SK-N-SH (cell line): ENCODE measurements at regions of chr7 and their contacts with region 1.

Region 1: DNA sequence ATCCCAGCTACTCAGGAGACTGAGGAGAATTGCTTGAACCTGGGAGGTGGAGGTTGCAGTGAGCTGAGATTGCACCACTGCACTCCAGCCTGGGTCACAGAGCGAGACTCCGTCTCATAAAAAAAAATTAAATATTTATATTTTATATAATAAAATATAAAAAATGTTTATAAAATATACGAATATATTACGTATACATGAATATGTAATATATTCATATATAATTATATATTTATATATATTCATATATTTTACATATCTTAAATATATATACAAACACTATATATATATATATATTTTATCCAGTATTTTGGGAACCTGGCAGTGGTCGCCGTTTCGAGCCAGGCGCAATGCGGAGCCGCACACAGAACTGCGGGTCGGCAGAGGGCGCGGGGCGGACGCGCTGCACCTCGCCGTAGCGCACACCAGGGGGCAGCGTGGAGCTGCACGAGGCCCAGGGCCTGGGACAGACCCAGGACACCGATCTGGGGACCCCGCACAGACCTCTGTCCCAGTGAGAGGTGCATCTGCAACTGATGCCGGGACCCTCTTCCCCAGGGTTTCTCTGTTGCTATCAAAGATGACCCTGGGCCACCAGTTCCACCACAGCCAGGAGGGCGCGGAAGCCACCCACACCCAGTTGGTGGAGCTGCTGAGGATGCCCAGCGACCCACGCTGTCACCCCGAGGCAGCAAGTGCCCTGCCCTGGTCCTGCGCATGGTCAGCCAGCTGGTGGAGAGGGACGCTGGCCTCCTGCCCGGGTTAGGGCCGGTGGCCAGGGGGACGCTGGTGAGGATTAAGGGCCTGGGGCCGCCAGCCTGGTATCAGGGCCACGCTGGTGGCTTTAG is 22.7 kb downstream of the AP5Z1 start:
- DNase-seq: peak; percentile 97
- H3K4me3 ChIP-seq: no peak overlapping the region
- H3K27ac ChIP-seq: peak overlapping the region in 1 of 2 experiments; percentile 41; a peak in 1 of 4 replicates
- H3K4me1 ChIP-seq: peaks cover 0 to 9% of the 10 kb centered on the region in 2 experiments; a peak in 1 of 4 replicates
- H3K27me3 ChIP-seq: no peaks in the 10 kb centered on the region
- CTCF ChIP-seq: peak; percentile 76
- EP300 ChIP-seq: no peak
- RAD21 ChIP-seq: peak; percentile 69

Region 2: GRCh38 chr7:4775250-4775847 is 22.7 kb before region 1 on chr7 and contains the start of gene AP5Z1:
- CTCF ChIA-PET with region 1: interaction called, 14 read pairs
- POLR2A ChIA-PET with region 1: interaction called, 6 read pairs
- DNase-seq: peak; percentile 100
- H3K4me3 ChIP-seq: peak within 1 kb of the TSS; percentile 84 to 99
- H3K27ac ChIP-seq: peak within 1 kb of the TSS; percentile 87 to 89
- H3K4me1 ChIP-seq: peaks cover 9 to 18% of the 10 kb centered on the region in 2 experiments; a peak in 1 of 4 replicates
- H3K27me3 ChIP-seq: no peaks in the 10 kb centered on the region
- CTCF ChIP-seq: 0 out of 2 replicates have a peak, but pooled peaks have one; percentile 7
- EP300 ChIP-seq: peak in 1 of 2 experiments; percentile 24; a peak in 2 of 4 replicates
- RAD21 ChIP-seq: no peak
- polyA plus RNA-seq, gene AP5Z1: 29.5 and 36.7 TPM in 2 replicates

Region 3: DNA sequence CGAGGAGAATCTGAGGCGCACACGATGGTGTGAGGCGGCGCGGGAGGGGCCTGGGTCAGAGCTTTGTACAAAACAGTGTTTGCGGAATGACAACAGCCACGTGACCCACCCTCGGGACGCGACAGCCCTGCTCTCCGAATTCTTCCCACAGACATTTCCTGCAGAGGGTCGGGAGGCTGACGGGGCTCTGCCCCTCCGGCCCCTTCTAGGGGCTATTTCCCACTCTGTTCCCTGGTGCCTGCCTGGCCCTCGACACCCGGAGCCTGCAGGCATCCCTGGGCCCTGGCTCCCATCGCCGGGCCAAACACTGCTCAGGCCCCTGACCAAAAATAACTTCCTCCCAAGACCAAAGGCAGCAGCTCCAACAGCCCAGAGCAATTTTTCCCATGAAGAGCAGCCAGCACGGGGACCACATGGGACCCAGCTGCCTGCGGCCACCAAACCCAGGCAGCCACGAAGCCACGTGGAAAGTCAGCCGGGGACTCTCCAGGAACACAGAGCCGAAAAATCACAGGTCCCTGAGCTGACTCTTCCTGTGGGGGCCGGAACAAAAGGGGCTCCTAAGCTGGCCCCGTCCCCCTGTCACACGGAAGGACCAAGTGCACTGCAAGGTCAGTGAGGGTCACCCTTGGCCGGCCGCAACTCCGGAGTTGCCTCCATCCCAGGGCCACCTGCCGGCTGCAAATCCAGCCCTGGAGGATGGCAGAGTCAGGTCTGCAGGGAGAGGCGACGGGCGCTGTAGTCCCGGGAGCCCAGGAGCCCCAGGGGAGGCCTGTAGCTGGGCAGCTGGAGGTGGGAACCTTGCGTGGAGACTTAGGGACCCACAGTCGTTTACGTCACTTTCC is 21.7 kb after region 1 on chr7:
- CTCF ChIA-PET with region 1: interaction called, 16 read pairs
- POLR2A ChIA-PET with region 1: no interaction called
- DNase-seq: peak; percentile 41
- H3K4me3 ChIP-seq: no peak overlapping the region
- H3K27ac ChIP-seq: no peak overlapping the region
- H3K4me1 ChIP-seq: no peaks in the 10 kb centered on the region; a peak in 1 of 4 replicates
- H3K27me3 ChIP-seq: no peaks in the 10 kb centered on the region
- CTCF ChIP-seq: no peak
- EP300 ChIP-seq: no peak
- RAD21 ChIP-seq: no peak

Region 4: GRCh38 chr7:5077740-5078139 is 279.7 kb after region 1 on chr7:
- CTCF ChIA-PET with region 1: interaction called, 98 read pairs
- POLR2A ChIA-PET with region 1: no interaction called
- DNase-seq: peak; percentile 47
- H3K4me3 ChIP-seq: peak overlapping the region; percentile 2 to 9; a peak in 1 of 4 replicates
- H3K27ac ChIP-seq: no peak overlapping the region
- H3K4me1 ChIP-seq: peaks cover 0 to 5% of the 10 kb centered on the region in 2 experiments; a peak in 1 of 4 replicates
- H3K27me3 ChIP-seq: peaks cover 18% of the 10 kb centered on the region; the same call in 1 of the 2 replicates
- CTCF ChIP-seq: no peak
- EP300 ChIP-seq: no peak
- RAD21 ChIP-seq: no peak

Region 5: DNA sequence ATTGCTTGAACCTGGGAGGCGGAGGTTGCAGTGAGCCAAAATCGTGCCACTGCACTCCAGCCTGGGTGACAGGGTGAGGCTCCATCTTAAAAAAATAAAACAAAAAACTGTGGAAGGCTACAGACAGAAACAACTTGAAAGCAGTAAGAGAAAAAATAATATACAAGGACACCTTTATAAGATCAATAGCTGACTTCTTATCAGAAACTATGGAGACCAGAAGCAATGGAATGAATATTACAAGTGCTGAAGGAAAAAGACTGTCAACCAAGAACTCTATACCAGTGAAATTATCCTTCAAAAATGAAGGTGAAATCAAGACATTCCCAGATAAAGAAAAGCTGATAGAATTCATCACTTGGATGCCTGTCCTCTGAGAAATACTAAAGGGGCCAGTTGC is 296.6 kb after region 1 on chr7:
- CTCF ChIA-PET with region 1: interaction called, 15 read pairs
- POLR2A ChIA-PET with region 1: no interaction called
- DNase-seq: no peak
- H3K4me3 ChIP-seq: no peak overlapping the region
- H3K27ac ChIP-seq: no peak overlapping the region
- H3K4me1 ChIP-seq: no peaks in the 10 kb centered on the region
- H3K27me3 ChIP-seq: no peaks in the 10 kb centered on the region
- CTCF ChIP-seq: no peak
- EP300 ChIP-seq: no peak
- RAD21 ChIP-seq: no peak